ENCODE measurements at regions of chr5 and their contacts with region 1.

Region 1: DNA sequence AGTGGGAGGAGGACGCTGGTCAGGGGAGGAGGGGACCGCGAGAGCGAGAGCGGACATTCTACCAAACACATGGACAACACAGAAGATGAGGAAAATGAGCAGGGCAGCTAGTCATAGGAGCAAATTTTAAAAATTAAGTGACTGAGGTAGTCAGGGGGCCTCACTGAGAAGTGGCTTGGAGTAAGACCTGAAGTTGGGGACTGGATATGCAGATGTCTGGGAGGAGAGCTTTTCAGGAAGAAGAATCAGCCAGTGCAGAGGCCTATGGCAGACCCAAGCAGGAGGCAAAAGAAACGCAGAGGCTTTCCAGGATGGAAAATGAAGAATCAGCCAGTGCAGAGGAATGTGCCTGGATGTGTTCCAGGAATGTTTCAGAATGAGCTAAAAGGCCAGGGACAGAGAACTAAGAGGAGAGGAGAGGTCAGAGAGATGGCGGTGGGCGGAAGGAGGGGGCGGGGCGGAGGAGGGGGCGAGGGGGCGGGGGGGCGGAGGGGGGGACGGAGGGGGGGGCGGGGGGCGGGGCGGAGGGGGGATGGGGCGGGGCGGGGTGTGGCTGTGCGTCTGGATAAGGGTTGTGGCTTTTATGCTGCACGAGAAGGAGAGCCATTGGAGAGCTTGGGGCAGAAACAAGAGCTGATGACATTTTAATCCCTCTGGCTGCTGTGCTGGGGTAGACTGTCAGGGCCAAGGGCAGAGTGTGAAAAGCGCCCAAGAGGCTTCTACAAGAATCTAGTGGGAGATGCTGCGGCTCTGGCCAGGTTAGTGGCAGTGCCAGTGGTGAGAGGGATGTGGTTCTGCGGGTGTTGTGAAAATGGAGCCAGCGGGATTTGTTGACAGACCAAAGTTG is 129.6 kb downstream of the KCNIP1 start:
- DNase-seq: peak; percentile 83
- H3K4me3 ChIP-seq: peak overlapping the region in 2 of 3 experiments; percentile 23 to 49
- H3K27ac ChIP-seq: peak overlapping the region; percentile 64
- H3K4me1 ChIP-seq: peaks cover 9% of the 10 kb centered on the region
- H3K27me3 ChIP-seq: peaks cover 0 to 4% of the 10 kb centered on the region in 2 experiments
- CTCF ChIP-seq: no peak
- POLR2A ChIP-seq: peak; percentile 30

Region 2: DNA sequence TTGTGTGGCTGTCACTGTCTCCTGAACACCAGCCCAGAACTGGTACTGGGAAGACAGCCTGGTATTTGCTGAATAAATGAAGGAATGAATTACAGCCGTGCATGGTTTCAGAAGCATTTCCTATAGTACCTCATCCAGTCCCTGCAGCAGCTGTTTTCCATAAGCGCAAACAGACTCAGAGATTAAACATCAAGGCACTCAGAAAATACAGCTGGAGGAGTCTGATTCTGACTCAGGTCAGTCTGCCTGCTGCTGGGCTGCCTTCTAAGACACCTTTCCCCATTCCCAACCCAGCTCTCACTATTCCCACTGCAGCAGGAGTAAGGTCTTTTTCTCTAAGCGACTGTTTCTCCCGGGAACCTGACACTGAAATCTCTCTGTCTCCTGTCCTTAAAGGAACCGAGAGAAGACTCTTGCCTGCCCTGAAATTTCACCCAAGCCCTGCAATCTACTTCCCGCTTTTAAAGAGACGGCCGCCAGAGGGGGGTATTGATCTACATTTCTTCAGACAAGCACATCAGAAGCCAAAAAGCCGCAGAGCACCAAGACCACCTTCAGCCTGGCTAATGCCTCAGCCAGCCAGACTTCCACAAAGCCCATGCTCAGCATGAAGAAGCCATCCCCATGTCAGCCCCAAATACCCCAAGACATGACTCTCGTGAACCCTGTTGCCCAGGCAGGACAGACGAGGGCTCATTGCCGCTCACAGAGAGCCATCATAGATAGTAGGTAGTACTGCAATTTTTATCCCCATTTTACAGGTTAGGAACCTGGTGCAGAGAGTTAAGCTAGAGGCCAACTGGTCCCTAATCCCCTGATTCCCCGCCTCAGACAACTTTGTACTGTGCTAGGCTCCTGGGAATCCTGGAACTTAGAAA is 533.2 kb before region 1 on chr5:
- CTCF ChIA-PET with region 1: no interaction called
- POLR2A ChIA-PET with region 1: no interaction called
- dilution Hi-C with region 1: no loop called
- intact Hi-C with region 1: loop called (anchors 5 kb)
- DNase-seq: peak; percentile 80
- H3K4me3 ChIP-seq: no peak overlapping the region
- H3K27ac ChIP-seq: no peak overlapping the region
- H3K4me1 ChIP-seq: peaks cover 19% of the 10 kb centered on the region
- H3K27me3 ChIP-seq: no peaks in the 10 kb centered on the region
- CTCF ChIP-seq: peak; percentile 63 to 71
- POLR2A ChIP-seq: no peak

Region 3: DNA sequence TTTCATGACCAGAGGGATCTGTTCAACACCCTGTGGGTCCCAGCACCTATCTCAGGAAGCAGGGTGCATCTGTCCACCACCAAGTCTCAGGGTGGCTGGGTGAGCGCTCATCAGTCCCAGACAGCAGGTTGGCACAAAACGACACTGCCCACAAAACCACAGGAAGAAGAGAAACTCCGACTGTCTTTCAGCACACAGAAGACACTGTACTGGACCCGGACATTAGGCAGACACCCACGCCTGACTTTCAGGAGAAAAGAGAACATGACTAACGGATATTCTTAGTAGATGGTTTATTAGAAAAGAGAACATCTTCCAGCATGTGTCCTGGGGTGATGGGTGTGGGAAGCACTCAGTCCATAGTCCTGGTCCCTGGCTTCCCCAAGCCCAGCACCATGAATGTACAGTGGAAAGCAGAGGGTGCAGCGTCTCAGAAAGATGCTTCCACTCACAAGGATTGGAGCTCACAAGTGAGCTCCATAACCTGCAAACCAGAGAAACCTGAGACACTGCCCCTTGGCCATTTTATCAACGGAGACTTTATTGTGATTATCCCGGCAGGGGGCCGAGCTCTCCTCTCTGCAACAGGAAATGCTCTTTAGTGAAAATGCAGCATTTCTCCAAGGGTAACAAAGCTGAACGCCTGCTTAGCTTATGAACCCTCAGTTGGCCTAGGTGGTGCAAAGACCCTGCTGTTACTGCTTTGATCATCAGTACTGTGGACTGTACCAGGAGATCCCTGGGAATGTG is 300.1 kb before region 1 on chr5:
- CTCF ChIA-PET with region 1: interaction called, 3 read pairs
- POLR2A ChIA-PET with region 1: no interaction called
- dilution Hi-C with region 1: no loop called
- intact Hi-C with region 1: loop called (anchors 5 kb)
- DNase-seq: no peak
- H3K4me3 ChIP-seq: no peak overlapping the region
- H3K27ac ChIP-seq: no peak overlapping the region
- H3K4me1 ChIP-seq: peaks cover 14% of the 10 kb centered on the region
- H3K27me3 ChIP-seq: peaks cover 0 to 2% of the 10 kb centered on the region in 2 experiments
- CTCF ChIP-seq: no peak
- POLR2A ChIP-seq: no peak

Region 4: GRCh38 chr5:170466988-170467707 is 166.3 kb before region 1 on chr5:
- CTCF ChIA-PET with region 1: interaction called, 17 read pairs
- POLR2A ChIA-PET with region 1: no interaction called
- dilution Hi-C with region 1: no loop called
- intact Hi-C with region 1: no loop called
- DNase-seq: peak; percentile 91
- H3K4me3 ChIP-seq: no peak overlapping the region
- H3K27ac ChIP-seq: peak overlapping the region; percentile 77
- H3K4me1 ChIP-seq: peaks cover 33% of the 10 kb centered on the region
- H3K27me3 ChIP-seq: no peaks in the 10 kb centered on the region
- CTCF ChIP-seq: no peak
- POLR2A ChIP-seq: no peak

Region 5: GRCh38 chr5:170504031-170504596 is 129.3 kb before region 1 on chr5:
- CTCF ChIA-PET with region 1: interaction called, 12 read pairs
- POLR2A ChIA-PET with region 1: no interaction called
- dilution Hi-C with region 1: no loop called
- intact Hi-C with region 1: no loop called
- DNase-seq: peak; percentile 24
- H3K4me3 ChIP-seq: peak overlapping the region in 1 of 3 experiments; percentile 22
- H3K27ac ChIP-seq: no peak overlapping the region
- H3K4me1 ChIP-seq: no peaks in the 10 kb centered on the region
- H3K27me3 ChIP-seq: peaks cover 45 to 46% of the 10 kb centered on the region in 2 experiments
- CTCF ChIP-seq: no peak
- POLR2A ChIP-seq: no peak

Region 6: GRCh38 chr5:170791325-170791954 is 158.0 kb after region 1 on chr5:
- CTCF ChIA-PET with region 1: interaction called, 112 read pairs
- POLR2A ChIA-PET with region 1: interaction called, 3 read pairs
- dilution Hi-C with region 1: no loop called
- intact Hi-C with region 1: loop called (anchors 1 kb)
- DNase-seq: peak; percentile 66
- H3K4me3 ChIP-seq: no peak overlapping the region
- H3K27ac ChIP-seq: no peak overlapping the region
- H3K4me1 ChIP-seq: no peaks in the 10 kb centered on the region
- H3K27me3 ChIP-seq: no peaks in the 10 kb centered on the region
- CTCF ChIP-seq: peak; percentile 64 to 69
- POLR2A ChIP-seq: no peak